PC-3 (cell line): ENCODE measurements at regions of chr7 and their contacts with region 1.

Region 1: DNA sequence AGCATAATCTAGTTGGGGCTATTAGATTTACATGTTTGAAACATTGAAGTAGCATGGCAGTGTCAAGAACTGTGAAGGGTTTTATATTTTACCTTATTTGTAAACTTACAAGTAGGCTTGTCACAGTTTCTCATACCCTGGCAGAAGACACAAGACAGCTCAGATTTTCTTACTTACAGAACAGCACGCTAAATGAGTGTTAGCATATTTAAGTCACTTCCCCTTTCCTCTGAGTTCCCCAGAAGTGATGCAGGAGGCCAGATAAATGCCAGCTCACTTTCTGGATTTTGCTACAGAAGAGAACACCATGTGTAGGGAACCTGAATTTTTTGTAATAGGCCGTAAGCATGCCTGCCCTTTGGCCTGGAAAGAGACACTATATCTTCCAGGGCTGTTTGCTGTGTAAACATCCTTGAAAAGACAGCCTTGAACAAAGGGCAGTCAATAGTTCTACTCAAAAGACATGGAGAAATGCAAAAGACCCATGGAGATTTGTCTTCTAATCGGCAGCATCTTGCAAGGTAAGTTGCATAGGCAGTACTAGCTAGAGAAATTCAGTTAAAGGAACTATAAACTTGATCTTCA is 279.1 kb downstream of the PHF14 start:
- DNase-seq: peak; percentile 37
- ATAC-seq: peak; percentile 47
- H3K4me3 ChIP-seq: no peak overlapping the region
- H3K27ac ChIP-seq: no peak overlapping the region
- H3K4me1 ChIP-seq: peaks cover 34% of the 10 kb centered on the region
- H3K27me3 ChIP-seq: no peaks in the 10 kb centered on the region
- CTCF ChIP-seq: no peak

Region 2: GRCh38 chr7:10646194-10646593 is 606.6 kb before region 1 on chr7:
- CTCF ChIA-PET with region 1: no interaction called
- POLR2A ChIA-PET with region 1: no interaction called
- intact Hi-C with region 1: no loop called
- DNase-seq: no peak
- ATAC-seq: no peak
- H3K4me3 ChIP-seq: no peak overlapping the region
- H3K27ac ChIP-seq: no peak overlapping the region
- H3K4me1 ChIP-seq: no peaks in the 10 kb centered on the region
- H3K27me3 ChIP-seq: no peaks in the 10 kb centered on the region
- CTCF ChIP-seq: no peak

Region 3: DNA sequence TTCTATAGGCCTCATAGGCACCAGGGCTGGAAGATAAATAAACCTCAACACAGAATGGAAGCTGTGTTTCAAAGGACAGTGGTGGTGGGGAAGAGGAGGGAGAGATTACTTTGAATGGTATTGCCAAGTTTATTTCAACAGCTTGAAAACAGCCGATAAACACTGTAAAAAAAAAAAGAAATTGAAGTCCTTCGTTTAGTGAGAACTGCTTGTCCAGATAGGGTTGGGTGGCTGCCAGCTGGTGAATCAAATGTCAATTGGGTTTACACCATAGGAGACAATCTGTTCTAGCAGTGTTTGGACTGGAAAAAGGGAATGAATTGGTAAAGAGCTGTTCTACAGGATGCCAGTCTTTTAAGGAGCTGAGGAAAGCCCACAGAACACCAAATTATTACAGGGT is 24.3 kb before region 1 on chr7:
- CTCF ChIA-PET with region 1: no interaction called
- POLR2A ChIA-PET with region 1: no interaction called
- intact Hi-C with region 1: no loop called
- DNase-seq: peak; percentile 15
- ATAC-seq: peak; percentile 46; the same call in 1 of the 2 replicates
- H3K4me3 ChIP-seq: no peak overlapping the region
- H3K27ac ChIP-seq: no peak overlapping the region
- H3K4me1 ChIP-seq: no peaks in the 10 kb centered on the region
- H3K27me3 ChIP-seq: no peaks in the 10 kb centered on the region
- CTCF ChIP-seq: no peak

Region 4: DNA sequence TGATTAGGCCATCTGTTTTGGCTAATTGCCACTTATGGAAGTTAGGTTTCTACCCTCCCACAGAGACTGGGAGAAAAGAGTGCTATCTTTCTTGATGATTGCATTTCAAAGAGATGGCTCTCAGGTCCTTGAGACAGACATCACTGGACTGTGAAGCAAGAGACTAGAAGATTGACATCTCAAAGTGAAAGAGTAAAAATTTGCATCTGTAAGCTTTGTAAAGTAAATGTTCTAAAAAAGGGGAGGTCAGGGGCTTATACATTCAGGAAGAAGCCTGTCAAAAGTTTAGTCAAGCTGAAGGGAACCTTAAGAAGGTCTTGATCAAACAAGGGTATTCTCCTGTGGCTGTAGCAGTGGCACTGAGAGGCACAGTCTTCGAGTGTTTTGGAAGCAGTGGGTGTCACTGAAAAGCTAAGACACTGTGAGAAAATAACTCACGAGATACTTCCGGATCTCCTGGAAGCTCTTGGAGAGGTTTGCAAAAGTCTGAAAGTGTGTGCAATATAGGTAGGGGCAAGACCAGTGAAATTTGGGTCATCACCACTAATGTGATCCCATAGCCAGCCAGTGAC is 63.0 kb after region 1 on chr7:
- CTCF ChIA-PET with region 1: no interaction called
- POLR2A ChIA-PET with region 1: no interaction called
- intact Hi-C with region 1: loop called (anchors 5 kb)
- DNase-seq: no peak
- ATAC-seq: no peak
- H3K4me3 ChIP-seq: no peak overlapping the region
- H3K27ac ChIP-seq: no peak overlapping the region
- H3K4me1 ChIP-seq: peaks cover 8% of the 10 kb centered on the region; the same call in 1 of the 2 replicates
- H3K27me3 ChIP-seq: no peaks in the 10 kb centered on the region
- CTCF ChIP-seq: no peak

Region 5: DNA sequence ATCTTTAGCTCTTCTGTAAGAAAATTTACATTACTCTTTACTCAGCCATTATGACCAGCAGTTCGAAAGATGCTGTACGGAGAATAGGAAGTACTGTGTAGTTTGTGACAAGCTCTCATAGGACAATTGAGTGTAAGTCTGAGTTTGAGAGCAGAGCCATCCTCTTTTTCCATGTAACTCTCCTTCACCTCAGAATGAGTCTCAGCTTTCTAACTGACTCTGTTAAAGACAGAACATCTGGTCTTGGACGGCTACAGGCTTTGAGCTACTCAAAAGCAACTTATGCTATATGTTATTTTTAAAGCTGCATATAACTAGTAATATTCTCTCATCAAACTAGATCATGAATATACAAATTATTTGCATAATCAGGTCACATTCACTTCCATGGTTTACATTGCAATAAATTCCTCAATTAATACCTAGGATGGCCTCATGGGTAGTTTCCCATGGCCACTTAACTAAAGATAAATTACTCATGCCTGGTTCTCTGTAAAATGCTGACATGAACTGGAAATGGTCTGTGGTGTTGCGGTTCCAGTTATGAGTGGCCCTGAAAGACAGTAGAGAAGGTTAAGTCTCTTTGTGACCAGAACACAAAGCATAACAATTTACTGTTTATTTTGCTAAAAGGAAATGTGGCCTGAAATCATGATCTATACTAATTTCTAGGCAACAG is 79.5 kb after region 1 on chr7:
- CTCF ChIA-PET with region 1: no interaction called
- POLR2A ChIA-PET with region 1: no interaction called
- intact Hi-C with region 1: loop called (anchors 5 kb)
- DNase-seq: no peak
- ATAC-seq: no peak
- H3K4me3 ChIP-seq: no peak overlapping the region
- H3K27ac ChIP-seq: no peak overlapping the region
- H3K4me1 ChIP-seq: peaks cover 4% of the 10 kb centered on the region; the same call in 1 of the 2 replicates
- H3K27me3 ChIP-seq: no peaks in the 10 kb centered on the region
- CTCF ChIP-seq: no peak